ENCODE measurements at regions of chr6 and their contacts with region 1.

Region 1: DNA sequence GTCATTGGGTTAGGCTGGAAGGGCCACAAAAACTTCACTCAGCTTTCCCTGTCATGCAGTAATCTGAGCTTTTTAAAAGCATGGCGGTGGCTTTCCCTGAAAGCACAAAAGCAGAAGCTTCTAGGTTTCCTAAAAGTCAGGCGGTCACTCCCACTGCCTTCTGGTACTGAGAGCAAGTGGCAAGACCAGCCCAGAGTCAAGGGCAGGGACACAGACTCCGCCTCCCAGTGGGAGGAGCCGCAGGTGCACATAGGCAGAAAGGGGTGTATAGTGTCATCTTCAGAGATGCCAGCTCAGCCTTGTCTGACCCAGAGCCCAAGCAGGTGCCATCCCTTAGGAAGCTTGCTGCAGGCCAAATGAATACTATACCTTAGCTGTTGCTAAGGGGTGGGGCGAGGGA is 18.0 kb upstream of the PACSIN1 start:
- DNase-seq: no peak
- H3K4me3 ChIP-seq: no peak overlapping the region
- CTCF ChIP-seq: no peak

Region 2: DNA sequence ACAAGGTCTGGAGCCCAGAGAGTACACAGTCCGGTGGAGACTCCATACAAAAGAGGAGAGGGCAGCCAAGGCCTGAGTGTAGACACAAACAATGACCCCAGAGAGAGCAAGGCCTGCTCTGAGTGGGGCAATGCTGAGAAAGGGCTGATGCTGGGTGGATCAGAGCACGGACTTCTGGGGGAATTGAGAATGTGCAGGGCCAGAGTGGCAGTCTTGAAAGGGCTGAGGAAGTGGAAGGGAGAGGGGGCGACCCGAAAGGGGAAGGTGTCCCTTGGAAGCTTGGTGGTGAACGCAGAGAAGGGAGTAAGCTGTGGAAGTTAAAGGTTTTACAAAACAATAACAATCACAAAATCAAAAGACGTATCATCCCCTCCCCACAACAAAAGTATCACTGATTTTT is 290.1 kb before region 1 on chr6:
- in situ Hi-C with region 1: no loop called
- DNase-seq: no peak
- H3K4me3 ChIP-seq: no peak overlapping the region
- CTCF ChIP-seq: no peak

Region 3: DNA sequence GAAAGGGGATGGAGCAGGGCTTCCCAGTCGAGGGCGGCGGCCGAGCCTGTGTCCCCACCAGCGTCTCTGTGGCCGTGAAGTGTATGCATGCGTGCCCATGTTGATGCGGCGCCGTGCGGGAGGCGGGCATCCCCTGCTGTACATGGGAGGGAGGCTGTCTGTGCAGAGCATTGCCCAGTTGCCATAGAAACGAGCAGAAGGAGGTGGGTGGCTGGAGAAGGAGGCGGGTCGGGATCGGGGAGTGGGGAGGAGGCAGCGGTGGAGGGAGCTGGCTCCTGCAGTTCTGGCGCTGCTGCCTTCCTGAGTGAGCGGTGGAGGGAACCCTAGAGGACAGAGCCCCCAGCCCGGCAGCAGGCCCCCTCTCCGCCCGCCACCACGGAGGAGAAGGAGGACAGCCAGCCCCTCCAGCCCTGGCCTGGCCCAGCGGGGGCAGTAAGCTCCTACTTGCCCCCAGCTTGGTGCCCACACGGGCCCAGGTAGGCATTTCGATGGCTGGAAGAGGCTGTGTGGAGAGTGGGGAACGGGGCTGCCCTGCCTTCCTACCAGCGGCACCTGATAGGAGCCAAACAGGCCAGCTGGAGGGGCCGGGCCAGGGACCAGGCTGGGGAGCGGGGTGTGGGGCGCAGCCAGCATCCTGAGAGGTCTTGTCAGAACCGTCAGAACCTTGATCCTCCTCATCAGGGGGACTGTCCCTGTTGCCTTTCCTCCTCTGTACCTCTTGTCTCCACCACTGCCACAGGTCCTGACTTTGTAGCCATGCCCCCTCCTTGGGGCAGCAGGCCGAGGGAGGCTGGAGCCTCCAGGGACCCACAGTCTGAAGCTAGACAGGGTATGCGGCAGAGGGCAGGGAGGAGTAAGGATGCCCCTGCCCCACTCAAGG is 66.9 kb after region 1 on chr6:
- in situ Hi-C with region 1: loop called (anchors 5 kb)
- DNase-seq: peak; percentile 12
- H3K4me3 ChIP-seq: no peak overlapping the region
- CTCF ChIP-seq: no peak

Region 4: GRCh38 chr6:34595332-34596184 is 147.6 kb after region 1 on chr6:
- in situ Hi-C with region 1: loop called (anchors 5 kb)
- DNase-seq: no peak
- H3K4me3 ChIP-seq: no peak overlapping the region
- CTCF ChIP-seq: no peak

Measured in astrocyte of the cerebellum (primary cell).